Transverse colon (tissue), 4 donors: ENCODE measurements at regions of chr2 and their contacts with region 1.

Region 1: DNA sequence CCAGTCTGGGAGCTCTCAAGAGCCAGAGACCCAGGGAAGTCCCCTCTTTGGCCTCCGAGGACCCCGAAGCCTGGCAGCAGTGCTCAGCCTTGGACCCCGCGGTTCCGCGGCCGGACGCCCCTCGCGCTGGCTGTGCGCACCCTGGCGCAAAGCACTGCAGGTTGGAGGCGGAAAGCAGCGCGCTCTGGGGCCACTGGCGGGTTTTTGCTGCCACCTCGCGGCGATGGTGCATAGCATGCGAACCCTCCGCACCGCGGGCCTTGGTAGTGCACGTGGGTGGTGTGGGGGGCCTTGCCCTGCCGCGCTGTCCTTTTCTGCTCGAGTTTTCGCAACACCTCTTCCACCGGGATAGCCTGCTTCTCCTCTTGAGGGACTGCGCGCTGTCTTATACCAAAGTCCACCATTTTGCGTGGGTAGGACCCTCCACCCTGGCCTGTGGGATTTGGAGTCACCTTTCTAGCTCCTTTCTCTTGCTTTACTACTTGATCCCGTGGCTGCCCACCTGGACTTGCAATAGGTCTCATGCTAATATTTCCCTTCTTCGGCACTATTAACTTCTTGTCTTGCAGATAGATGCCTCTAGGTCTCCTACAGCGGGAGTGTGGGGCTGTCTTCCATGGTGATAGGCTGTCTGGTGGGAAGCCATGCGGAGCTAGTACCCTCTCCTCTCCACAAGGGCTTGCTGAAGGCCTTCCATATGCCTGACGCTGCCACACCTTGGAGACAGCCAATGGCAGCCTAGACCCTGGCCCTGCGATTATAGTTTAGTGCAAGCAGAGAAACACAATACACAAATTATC is 14.3 kb downstream of the SIX3 start:
- DNase-seq: peak; percentile 72
- H3K4me3 ChIP-seq: peak overlapping the region in 1 of 4 donors; percentile 25
- H3K27ac ChIP-seq: no peak overlapping the region
- H3K4me1 ChIP-seq: peaks cover 14 to 31% (median 26%) of the 10 kb centered on the region in 4 donors
- H3K27me3 ChIP-seq: peaks cover 87% of the 10 kb centered on the region
- CTCF ChIP-seq: peak; percentile 81 to 91 (median 82)
- EP300 ChIP-seq: no peak
- POLR2A ChIP-seq: no peak

Region 2: DNA sequence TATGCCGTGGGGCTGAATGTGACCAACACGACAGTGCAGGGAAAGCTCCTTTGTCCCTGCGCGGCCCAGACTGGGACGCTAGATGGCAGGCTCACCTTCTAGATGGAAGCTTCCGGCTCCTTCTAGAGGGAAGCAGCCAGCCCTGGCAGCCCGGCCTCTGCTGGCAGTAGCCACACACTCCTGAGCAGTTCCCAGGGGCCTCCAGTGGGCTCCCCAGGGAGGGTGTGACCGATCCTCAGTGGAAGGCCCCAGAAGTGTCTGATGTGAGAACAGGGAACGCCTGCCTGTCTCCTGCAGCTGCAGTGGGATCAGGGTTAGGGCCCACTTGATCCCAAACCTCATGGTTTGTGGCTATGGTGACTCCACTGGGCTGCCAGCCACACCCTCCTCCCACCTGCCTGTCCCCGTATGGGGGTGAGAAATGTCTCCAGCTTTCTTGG is 911.5 kb before region 1 on chr2:
- in situ Hi-C with region 1: loop called in 2 of 4 experiments (anchors 25 kb)
- intact Hi-C with region 1: no loop called
- DNase-seq: peak; percentile 87
- H3K4me3 ChIP-seq: no peak overlapping the region
- H3K27ac ChIP-seq: no peak overlapping the region
- H3K4me1 ChIP-seq: peaks cover 0 to 7% (median 6%) of the 10 kb centered on the region in 4 donors
- H3K27me3 ChIP-seq: no peaks in the 10 kb centered on the region
- CTCF ChIP-seq: peak; percentile 79 to 81 (median 81)
- EP300 ChIP-seq: no peak
- POLR2A ChIP-seq: no peak

Region 3: DNA sequence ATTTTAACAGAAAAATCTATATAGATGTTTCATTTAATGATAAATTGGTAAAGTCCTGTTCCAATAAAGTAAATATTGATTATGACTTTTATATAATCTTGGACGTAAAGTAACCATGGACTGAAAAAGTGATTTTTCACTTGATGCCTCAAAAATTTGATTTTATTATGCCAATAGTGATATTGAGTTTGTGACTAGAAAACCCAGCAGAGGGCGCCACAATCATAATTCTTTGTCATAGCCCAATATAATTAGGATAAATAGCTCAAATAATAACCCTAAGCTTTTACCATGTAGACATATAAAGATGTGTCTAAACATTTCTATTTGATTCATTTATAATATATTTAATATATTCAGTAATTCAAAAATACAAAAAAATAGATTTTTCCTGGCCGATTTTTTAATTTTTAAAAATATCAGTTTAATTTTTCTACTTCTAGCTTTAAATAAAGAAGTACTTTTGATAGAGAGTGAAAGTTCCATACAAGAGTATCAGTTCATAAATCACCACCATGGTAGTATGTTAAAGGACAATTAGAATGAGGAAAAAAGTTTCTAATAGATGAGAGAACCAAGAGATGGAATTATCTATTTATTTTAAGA is 563.4 kb before region 1 on chr2:
- in situ Hi-C with region 1: loop called in 1 of 4 experiments (anchors 25 kb)
- intact Hi-C with region 1: no loop called
- DNase-seq: peak; percentile 29
- H3K4me3 ChIP-seq: no peak overlapping the region
- H3K27ac ChIP-seq: no peak overlapping the region
- H3K4me1 ChIP-seq: no peaks in the 10 kb centered on the region
- H3K27me3 ChIP-seq: no peaks in the 10 kb centered on the region
- CTCF ChIP-seq: peak; percentile 35 to 62 (median 51)
- EP300 ChIP-seq: no peak
- POLR2A ChIP-seq: no peak

Region 4: DNA sequence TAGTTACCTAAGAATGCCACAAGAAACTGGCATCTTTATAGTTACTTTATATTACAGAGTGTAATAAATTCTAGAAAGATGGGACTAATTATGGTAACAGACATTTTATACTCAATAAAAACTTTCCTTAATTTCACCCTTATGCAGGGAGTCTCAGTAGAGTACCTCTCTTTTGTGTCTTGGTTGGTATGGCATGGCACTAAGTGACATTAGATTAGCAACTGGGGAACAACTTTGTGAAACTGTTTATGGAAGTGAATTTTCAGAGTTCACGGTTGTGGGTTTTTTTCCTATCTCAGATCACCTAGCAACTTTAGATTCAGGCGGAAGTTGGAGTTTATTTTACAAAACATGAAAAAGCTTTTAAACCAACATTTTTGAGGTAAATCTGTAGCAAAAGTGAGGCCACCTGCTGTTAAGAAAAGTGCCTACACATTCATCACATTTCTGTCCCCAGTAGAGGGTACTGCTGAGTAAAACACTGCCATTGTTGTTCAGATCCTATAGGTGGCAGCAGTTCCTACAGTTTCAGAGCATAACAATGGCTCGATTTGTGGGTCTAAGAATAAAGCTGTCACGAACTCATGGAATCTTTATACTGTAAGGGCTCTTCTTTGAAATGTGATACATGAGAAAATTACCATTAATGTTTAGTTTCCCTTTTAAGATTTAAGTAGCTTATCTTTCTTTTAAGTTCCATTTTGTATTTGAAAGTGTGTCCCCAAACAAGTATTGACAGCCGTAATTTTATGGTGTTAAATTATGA is 476.5 kb before region 1 on chr2:
- in situ Hi-C with region 1: loop called (anchors 10 to 25 kb)
- intact Hi-C with region 1: loop called (anchors 5 kb)
- DNase-seq: peak; percentile 16
- H3K4me3 ChIP-seq: no peak overlapping the region
- H3K27ac ChIP-seq: no peak overlapping the region
- H3K4me1 ChIP-seq: no peaks in the 10 kb centered on the region
- H3K27me3 ChIP-seq: no peaks in the 10 kb centered on the region
- CTCF ChIP-seq: peak; percentile 93 to 99 (median 96)
- EP300 ChIP-seq: no peak
- POLR2A ChIP-seq: no peak